ENCODE measurements at regions of chrX and their contacts with region 1.

Region 1: GRCh38 chrX:24838629-24839028 is 144.9 kb downstream of the POLA1 start:
- DNase-seq: peak; percentile 1
- ATAC-seq: peak; percentile 68
- H3K4me3 ChIP-seq: no peak overlapping the region
- H3K27ac ChIP-seq: no peak overlapping the region
- H3K4me1 ChIP-seq: no peaks in the 10 kb centered on the region
- H3K27me3 ChIP-seq: no peaks in the 10 kb centered on the region
- CTCF ChIP-seq: peak; percentile 28 to 60 (median 59); a peak in 5 of 6 replicates
- EP300 ChIP-seq: no peak
- POLR2A ChIP-seq: no peak
- RAD21 ChIP-seq: peak; percentile 53

Region 2: DNA sequence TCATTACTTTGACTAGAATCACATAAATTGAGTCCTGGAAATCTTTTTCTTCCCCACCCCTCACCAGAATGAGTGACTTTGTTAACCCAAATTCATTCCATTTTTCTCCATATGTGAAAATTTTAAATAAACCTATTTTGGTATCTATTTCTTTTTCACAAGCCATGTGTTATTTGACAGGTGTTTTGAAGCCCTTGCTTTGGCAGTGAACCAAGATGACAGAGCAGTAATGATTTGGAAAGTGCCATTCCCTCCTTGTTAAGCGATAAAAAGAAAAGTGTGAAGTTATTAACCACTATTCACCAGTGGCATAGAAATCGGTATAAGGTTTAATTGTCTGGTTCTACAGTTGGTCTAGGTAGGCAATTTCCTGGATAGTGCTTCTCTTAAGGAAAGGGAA is 78.8 kb before region 1 on chrX:
- CTCF ChIA-PET with region 1: no interaction called
- POLR2A ChIA-PET with region 1: no interaction called
- RAD21 ChIA-PET with region 1: no interaction called
- SMC1A ChIA-PET with region 1: no interaction called
- in situ Hi-C with region 1: no loop called
- intact Hi-C with region 1: loop called (anchors 5 kb)
- DNase-seq: no peak
- ATAC-seq: no peak
- H3K4me3 ChIP-seq: no peak overlapping the region
- H3K27ac ChIP-seq: no peak overlapping the region
- H3K4me1 ChIP-seq: no peaks in the 10 kb centered on the region
- H3K27me3 ChIP-seq: no peaks in the 10 kb centered on the region
- CTCF ChIP-seq: no peak
- EP300 ChIP-seq: no peak
- POLR2A ChIP-seq: no peak
- RAD21 ChIP-seq: no peak

Region 3: DNA sequence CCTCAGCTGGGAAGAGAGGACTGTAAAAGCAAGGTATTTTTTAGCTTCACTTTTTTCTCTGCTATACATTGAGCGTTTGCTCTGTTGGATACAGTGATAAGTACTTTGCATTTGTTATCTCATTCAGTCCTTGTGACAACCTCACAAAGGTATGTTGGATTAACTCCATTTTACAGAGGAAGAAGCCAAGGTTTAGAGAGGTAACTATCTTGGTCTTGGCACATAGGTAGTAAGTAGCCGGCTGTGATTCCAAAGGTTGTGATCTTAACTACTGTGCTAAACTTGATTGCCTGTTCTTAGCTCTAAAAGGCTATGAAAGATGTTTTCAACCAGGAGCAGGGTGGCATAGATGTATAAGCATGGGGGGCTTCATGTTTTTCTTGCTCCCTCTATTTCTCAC is 10.5 kb before region 1 on chrX:
- CTCF ChIA-PET with region 1: interaction called, 17 read pairs
- POLR2A ChIA-PET with region 1: no interaction called
- RAD21 ChIA-PET with region 1: no interaction called
- SMC1A ChIA-PET with region 1: interaction called, 4 read pairs
- in situ Hi-C with region 1: no loop called
- intact Hi-C with region 1: no loop called
- DNase-seq: no peak
- ATAC-seq: no peak
- H3K4me3 ChIP-seq: no peak overlapping the region
- H3K27ac ChIP-seq: no peak overlapping the region
- H3K4me1 ChIP-seq: no peaks in the 10 kb centered on the region
- H3K27me3 ChIP-seq: no peaks in the 10 kb centered on the region
- CTCF ChIP-seq: no peak
- EP300 ChIP-seq: no peak
- POLR2A ChIP-seq: no peak
- RAD21 ChIP-seq: no peak

Region 4: DNA sequence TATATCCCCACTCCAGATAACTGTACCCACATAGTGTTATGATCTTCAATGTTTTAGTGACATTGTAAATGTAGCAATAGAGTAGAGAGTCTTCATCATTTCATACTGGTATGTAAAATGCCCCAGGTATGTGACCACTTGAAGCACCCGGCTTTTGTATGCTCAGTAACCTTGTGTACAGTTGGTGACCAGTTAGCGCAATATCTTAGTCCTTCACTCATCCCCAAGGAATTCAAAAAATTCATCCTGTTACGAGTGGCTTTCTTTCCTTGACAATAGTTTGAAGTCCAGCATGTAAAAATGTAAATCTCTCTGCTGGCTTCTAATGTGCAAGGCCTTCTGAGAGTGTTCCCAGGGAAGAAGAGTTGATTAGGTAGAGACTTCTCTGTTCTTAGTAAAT is 31.5 kb after region 1 on chrX:
- CTCF ChIA-PET with region 1: interaction called, 21 read pairs
- POLR2A ChIA-PET with region 1: no interaction called
- RAD21 ChIA-PET with region 1: no interaction called
- SMC1A ChIA-PET with region 1: no interaction called
- in situ Hi-C with region 1: no loop called
- intact Hi-C with region 1: no loop called
- DNase-seq: no peak
- ATAC-seq: no peak
- H3K4me3 ChIP-seq: no peak overlapping the region
- H3K27ac ChIP-seq: no peak overlapping the region
- H3K4me1 ChIP-seq: no peaks in the 10 kb centered on the region
- H3K27me3 ChIP-seq: no peaks in the 10 kb centered on the region
- CTCF ChIP-seq: no peak
- EP300 ChIP-seq: no peak
- POLR2A ChIP-seq: no peak
- RAD21 ChIP-seq: no peak

Region 5: DNA sequence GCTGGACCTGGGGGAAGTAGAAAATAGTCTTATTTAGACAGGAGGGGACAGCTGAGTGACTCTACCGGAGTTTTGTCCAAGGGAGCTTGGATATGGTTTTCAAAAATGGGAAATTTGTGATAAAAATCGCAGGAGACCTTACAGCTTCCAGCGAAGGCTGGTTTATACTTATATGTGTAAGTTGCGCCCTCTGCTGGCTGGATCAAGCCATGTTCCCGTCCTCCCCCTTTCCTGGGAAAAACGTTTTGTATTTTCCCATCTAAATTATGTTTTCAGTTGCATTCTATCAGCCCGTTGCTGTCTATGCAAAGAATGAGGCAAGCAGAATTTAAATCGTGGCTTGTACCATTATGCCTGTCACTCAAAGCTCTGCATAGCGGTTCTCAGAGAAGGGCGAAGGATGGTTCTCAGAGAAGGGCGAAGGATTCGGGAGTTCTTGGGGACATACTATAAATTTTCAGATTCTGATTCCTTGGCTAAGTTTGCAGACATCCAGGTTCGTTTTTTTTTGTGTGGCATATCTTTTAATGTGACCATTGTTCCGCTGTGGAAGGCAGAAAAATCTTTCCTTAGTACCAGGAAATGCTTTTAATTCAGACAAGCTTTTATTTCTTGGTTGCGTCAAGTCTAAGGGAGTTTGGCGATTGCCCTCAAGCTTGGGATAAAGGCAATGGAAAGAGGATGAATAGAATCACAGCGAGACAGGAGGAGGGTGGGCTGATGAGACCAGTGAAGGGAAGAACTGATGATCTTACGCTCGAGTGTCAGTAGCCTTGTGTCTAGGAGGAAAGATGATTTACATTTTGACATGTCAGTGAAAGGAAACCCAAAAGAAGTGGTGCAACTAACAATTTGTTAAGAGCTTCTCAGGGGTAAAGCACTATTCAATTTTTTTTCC is 305.7 kb after region 1 on chrX:
- CTCF ChIA-PET with region 1: interaction called, 80 read pairs
- POLR2A ChIA-PET with region 1: no interaction called
- RAD21 ChIA-PET with region 1: interaction called, 18 read pairs
- SMC1A ChIA-PET with region 1: interaction called, 39 read pairs
- in situ Hi-C with region 1: loop called (anchors 5 kb)
- intact Hi-C with region 1: loop called (anchors 1 kb)
- DNase-seq: no peak
- ATAC-seq: peak; percentile 69
- H3K4me3 ChIP-seq: no peak overlapping the region
- H3K27ac ChIP-seq: no peak overlapping the region
- H3K4me1 ChIP-seq: no peaks in the 10 kb centered on the region
- H3K27me3 ChIP-seq: no peaks in the 10 kb centered on the region
- CTCF ChIP-seq: peak; percentile 71 to 76 (median 72)
- EP300 ChIP-seq: no peak
- POLR2A ChIP-seq: no peak
- RAD21 ChIP-seq: peak; percentile 72

Measured in GM12878 (cell line).